ENCODE measurements at regions of chr20 and their contacts with region 1.

Region 1: GRCh38 chr20:8860011-8860495 is 208.8 kb upstream of the PLCB4 start:
- DNase-seq: peak; percentile 96
- ATAC-seq: peak; percentile 91
- H3K4me3 ChIP-seq: peak overlapping the region; percentile 49; the same call in 1 of the 2 replicates
- H3K27ac ChIP-seq: peak overlapping the region; percentile 87
- H3K4me1 ChIP-seq: peaks cover 36% of the 10 kb centered on the region
- H3K27me3 ChIP-seq: no peaks in the 10 kb centered on the region
- CTCF ChIP-seq: no peak

Region 2: GRCh38 chr20:8938532-8938931 is 78.5 kb after region 1 on chr20:
- CTCF ChIA-PET with region 1: no interaction called
- POLR2A ChIA-PET with region 1: no interaction called
- intact Hi-C with region 1: loop called (anchors 1 kb)
- DNase-seq: peak; percentile 65
- ATAC-seq: peak; percentile 94
- H3K4me3 ChIP-seq: no peak overlapping the region
- H3K27ac ChIP-seq: peak overlapping the region; percentile 63
- H3K4me1 ChIP-seq: peaks cover 18% of the 10 kb centered on the region
- H3K27me3 ChIP-seq: no peaks in the 10 kb centered on the region
- CTCF ChIP-seq: no peak

Region 3: GRCh38 chr20:9035129-9035528 is 175.1 kb after region 1 on chr20:
- CTCF ChIA-PET with region 1: no interaction called
- POLR2A ChIA-PET with region 1: no interaction called
- intact Hi-C with region 1: no loop called
- DNase-seq: peak; percentile 88
- ATAC-seq: peak; percentile 98
- H3K4me3 ChIP-seq: no peak overlapping the region
- H3K27ac ChIP-seq: no peak overlapping the region
- H3K4me1 ChIP-seq: peaks cover 7% of the 10 kb centered on the region; the same call in 1 of the 2 replicates
- H3K27me3 ChIP-seq: no peaks in the 10 kb centered on the region
- CTCF ChIP-seq: no peak

Region 4: GRCh38 chr20:9051508-9051907 is 191.5 kb after region 1 on chr20:
- CTCF ChIA-PET with region 1: no interaction called
- POLR2A ChIA-PET with region 1: interaction called, 3 read pairs
- intact Hi-C with region 1: loop called (anchors 1 kb)
- DNase-seq: peak; percentile 99
- ATAC-seq: peak; percentile 96
- H3K4me3 ChIP-seq: peak overlapping the region; percentile 44
- H3K27ac ChIP-seq: peak overlapping the region; percentile 79
- H3K4me1 ChIP-seq: peaks cover 30% of the 10 kb centered on the region
- H3K27me3 ChIP-seq: no peaks in the 10 kb centered on the region
- CTCF ChIP-seq: no peak